Dorsolateral prefrontal cortex (tissue), 120 donors: ENCODE measurements at regions of chr15 and their contacts with region 1.

Region 1: DNA sequence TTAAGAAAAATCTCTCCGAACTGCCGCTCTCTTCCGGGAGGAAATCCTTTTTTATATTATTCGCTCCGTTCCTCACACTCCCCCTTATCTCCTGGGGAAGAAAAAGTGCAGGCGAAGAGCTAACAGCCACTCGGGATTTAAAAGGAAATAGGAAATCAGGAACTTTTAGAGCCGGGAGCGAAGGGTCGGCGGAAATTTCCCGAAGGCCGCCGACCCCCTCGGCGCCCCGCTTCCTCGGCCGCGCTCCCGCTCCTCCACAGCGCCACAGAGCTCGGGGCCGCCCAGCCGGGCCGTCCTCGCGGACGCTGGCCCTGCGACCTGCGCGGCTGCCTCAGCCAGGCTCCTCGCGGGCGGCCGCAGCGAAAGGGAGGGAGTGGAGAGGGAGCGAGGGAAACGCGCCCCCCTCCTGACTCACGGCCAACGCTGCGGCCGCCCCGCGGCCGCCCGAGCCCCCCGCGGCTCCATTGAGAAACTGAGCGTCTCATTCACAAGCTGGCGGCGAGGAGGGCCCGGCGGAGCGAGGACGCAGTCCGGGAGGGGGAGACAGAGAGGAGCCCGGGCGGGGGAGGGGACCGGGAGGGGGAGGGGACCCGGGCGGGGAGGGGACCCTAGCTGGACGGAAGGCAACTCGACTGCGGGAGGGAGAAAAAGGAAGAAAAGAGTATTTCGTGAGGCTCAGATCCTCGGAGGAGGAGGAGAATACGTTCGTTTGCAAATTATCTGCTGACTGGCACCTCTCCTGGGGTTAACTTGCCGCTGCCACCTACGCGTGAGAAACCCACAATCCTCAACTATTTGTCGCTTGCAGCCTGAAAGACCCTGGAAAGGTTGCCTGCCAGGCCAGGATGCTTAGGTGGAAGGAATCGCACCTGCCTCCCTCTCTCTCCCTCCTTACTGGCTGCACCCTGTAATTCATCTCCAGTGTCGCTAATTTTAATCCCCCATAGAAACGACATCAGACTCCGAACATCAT is at the start of gene PTPN9:
- DNase-seq: peak; percentile 65 to 85 (median 81)
- H3K4me3 ChIP-seq: peak within 1 kb of the TSS; percentile 64 to 97 (median 88)
- H3K27ac ChIP-seq: peak within 1 kb of the TSS; percentile 45 to 98 (median 93)
- H3K27me3 ChIP-seq: no peaks in the 10 kb centered on the region
- CTCF ChIP-seq: peak in 53 of 56 donors; percentile 3 to 59 (median 43)
- total RNA-seq, gene PTPN9: 17.1 to 54.6 (median 33.8) TPM

Region 2: DNA sequence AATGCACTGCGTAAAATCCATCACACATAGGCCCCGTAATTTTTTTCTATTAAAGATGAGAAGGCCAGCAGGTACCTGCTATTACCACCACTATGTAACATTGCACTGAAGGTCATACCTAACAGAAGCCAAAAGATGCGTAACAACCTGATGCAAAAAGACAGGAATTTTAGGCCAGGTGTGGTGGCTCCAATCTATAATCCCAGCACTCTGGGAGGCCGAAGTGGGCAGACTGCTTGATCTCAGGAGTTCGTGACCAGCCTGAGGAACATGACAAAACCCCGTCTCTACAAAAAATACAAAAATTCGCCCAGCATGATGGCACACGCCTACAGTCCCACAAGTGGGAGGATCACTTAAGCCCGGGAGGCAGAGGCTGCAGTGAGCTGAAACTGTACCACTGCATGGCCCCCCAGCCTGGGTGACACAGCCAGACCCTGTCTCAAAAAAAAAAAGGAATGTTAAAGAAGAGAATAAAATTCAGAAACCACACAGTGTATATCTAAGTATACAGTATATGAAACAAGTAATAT is 40.9 kb before region 1 on chr15:
- intact Hi-C with region 1: loop called in 1 of 2 experiments (anchors 5 kb)
- DNase-seq: no peak
- H3K4me3 ChIP-seq: no peak overlapping the region
- H3K27ac ChIP-seq: peak overlapping the region in 15 of 59 donors; percentile 4 to 54 (median 30)
- H3K27me3 ChIP-seq: no peaks in the 10 kb centered on the region
- CTCF ChIP-seq: no peak

Region 3: GRCh38 chr15:75625542-75626347 is 46.5 kb after region 1 on chr15 and contains the start of gene SNUPN:
- intact Hi-C with region 1: loop called in 1 of 2 experiments (anchors 1 kb)
- DNase-seq: peak; percentile 82 to 95 (median 92)
- H3K4me3 ChIP-seq: peak within 1 kb of the TSS; percentile 62 to 99 (median 94)
- H3K27ac ChIP-seq: peak within 1 kb of the TSS; percentile 81 to 99 (median 96)
- H3K27me3 ChIP-seq: no peaks in the 10 kb centered on the region
- CTCF ChIP-seq: peak in 26 of 56 donors; percentile 8 to 51 (median 24)
- total RNA-seq, gene SNUPN: 20.8 to 41.9 (median 29.4) TPM